Body of pancreas (tissue), 4 donors: ENCODE measurements at regions of chr22 and their contacts with region 1.

Region 1: GRCh38 chr22:47593911-47594311 is 831.5 kb downstream of the TBC1D22A start:
- DNase-seq: no peak
- ATAC-seq: no peak
- H3K4me3 ChIP-seq: no peak overlapping the region
- H3K27ac ChIP-seq: no peak overlapping the region
- H3K4me1 ChIP-seq: no peaks in the 10 kb centered on the region
- H3K27me3 ChIP-seq: no peaks in the 10 kb centered on the region
- CTCF ChIP-seq: no peak
- POLR2A ChIP-seq: no peak

Region 2: GRCh38 chr22:45612451-45612901 is 1981.4 kb before region 1 on chr22:
- intact Hi-C with region 1: loop called (anchors 10 kb)
- DNase-seq: peak in 1 of 4 donors; percentile 51
- ATAC-seq: peak; percentile 24
- H3K4me3 ChIP-seq: no peak overlapping the region
- H3K27ac ChIP-seq: peak overlapping the region in 1 of 4 donors; percentile 26
- H3K4me1 ChIP-seq: no peaks in the 10 kb centered on the region
- H3K27me3 ChIP-seq: no peaks in the 10 kb centered on the region
- CTCF ChIP-seq: no peak
- POLR2A ChIP-seq: no peak